ENCODE measurements at regions of chr19 and their contacts with region 1.

Region 1: DNA sequence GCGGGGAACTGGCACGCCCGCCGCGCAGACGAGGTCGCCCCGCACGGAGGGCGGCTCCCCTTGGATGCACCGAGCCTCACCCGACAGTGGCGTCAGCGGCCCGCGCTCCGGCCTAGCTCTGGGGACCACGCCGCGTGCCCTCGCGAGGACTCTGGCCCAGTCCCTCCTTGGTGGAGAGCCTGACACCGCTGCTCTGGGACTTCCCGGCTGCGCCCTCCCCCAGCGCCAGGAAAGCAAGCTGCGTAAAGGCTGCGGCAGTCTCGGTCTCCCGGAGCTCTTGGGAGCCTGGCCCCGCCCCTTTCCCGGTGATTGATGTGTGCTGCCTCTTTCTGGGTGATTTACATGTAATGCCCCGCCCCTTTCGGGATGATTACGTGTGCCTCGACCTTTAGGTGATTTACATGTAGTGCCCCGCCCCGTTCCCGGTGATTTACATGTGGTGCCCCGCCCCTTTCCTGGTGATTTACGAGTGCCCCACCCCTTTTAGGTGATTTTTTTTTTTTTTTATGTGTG is at the start of gene LENG9:
- DNase-seq: peak; percentile 97 to 100
- H3K4me3 ChIP-seq: peak within 1 kb of the TSS; percentile 71 to 79
- H3K27ac ChIP-seq: peak within 1 kb of the TSS; percentile 97
- H3K4me1 ChIP-seq: peaks cover 14 to 20% of the 10 kb centered on the region in 2 donors
- H3K27me3 ChIP-seq: no peaks in the 10 kb centered on the region
- CTCF ChIP-seq: no peak
- total RNA-seq, gene LENG9: 10.1 TPM

Region 2: DNA sequence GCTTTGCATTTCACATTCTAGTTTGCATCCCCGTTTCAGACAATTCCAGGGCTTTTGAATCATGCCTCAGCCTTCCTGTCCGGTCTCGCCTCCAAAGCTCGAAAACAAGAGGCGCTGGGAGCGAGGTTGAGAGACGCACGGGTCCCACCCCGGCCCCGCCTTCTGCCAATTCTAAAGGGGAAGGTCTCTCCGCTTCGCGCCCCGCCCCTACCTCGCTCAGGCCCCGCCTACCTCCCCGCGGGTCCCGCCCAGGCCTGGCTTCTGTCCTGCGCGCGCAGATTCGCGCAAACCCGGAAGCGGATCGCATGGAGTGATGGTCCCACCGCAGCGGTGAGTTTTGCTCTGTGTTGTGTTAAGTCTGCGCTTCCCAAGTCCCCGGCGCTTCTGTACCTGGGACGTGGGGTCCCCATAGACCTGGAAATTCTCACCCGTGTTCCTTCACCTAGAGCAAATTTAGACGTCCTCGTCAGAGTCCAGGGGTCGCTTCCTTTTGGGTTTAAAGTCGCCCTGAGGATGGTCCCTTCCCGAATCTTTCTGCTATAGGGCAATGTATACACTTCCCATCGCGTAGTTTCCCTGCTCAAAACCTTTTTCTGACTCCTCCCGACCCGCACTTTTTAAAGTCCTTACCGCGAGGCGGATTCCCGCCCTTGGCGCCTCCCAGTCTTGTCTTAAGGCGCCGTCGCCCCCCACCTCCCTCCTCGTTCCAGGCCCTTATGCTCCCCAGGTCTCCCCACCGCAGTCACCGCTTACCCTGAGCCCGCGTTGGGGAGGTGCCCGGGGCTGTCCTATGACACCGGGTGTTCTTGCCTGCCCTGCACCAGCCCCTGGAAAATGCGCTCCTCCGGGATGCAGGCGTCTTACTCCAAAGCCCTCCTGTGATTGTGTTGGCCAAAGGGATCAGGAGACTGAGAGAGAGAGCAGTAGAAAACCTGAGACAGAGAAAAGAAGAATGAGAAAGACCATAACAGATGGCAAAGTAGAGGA is 1129.8 kb before region 1 on chr19 and contains the start of gene ZNF845:
- intact Hi-C with region 1: loop called (anchors 5 kb)
- DNase-seq: peak; percentile 75 to 98
- H3K4me3 ChIP-seq: peak within 1 kb of the TSS; percentile 66 to 73
- H3K27ac ChIP-seq: peak within 1 kb of the TSS; percentile 77 to 82
- H3K4me1 ChIP-seq: peaks cover 0 to 4% of the 10 kb centered on the region in 2 donors
- H3K27me3 ChIP-seq: no peaks in the 10 kb centered on the region
- CTCF ChIP-seq: no peak
- total RNA-seq, gene ZNF845: 3.1 TPM

Region 3: DNA sequence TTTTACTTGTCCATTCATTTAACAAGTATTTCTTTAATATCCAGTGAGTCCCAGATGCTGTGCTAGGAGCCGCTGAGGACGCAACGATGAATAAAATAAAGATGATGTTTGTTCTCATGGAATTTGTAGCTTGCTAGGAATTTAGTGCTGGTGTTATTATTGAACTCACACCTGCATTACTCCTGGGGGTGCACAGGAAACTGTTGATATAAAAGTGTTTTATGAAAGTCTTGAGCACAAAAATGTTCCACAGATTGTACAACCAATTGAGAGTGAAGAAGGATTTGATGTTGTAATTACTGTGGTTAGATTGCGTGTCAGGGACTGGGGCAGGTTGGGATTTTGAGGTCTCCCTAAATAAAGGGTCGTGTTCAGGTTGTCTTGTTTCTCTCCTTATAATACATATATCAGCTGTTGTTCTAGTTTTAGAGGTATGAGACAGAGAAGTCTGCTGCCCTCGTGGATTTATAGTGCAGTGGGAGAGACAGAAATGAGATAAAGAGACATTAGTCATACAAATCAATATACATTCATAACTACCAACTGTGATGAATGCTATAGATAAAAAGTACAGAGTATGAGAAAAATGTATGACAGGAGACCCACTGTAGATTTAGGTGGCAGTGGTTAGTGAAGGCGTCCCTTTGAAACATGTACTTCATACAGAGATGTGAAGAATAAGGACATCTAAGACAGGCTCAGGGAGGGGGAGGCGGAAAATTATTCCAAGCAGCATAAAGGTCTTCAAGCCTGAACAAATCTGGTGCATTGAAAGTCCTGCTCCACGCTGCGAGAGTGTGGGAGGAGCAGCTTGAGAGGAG is 460.9 kb before region 1 on chr19:
- intact Hi-C with region 1: no loop called
- DNase-seq: no peak
- H3K4me3 ChIP-seq: no peak overlapping the region
- H3K27ac ChIP-seq: no peak overlapping the region
- H3K4me1 ChIP-seq: no peaks in the 10 kb centered on the region
- H3K27me3 ChIP-seq: no peaks in the 10 kb centered on the region
- CTCF ChIP-seq: no peak

Region 4: GRCh38 chr19:54137086-54137921 is 326.3 kb before region 1 on chr19 and contains the start of gene CNOT3:
- intact Hi-C with region 1: loop called (anchors 1 kb)
- DNase-seq: peak; percentile 100
- H3K4me3 ChIP-seq: peak within 1 kb of the TSS; percentile 95 to 98
- H3K27ac ChIP-seq: peak within 1 kb of the TSS; percentile 96 to 98
- H3K4me1 ChIP-seq: peaks cover 0 to 15% of the 10 kb centered on the region in 2 donors
- H3K27me3 ChIP-seq: no peaks in the 10 kb centered on the region
- CTCF ChIP-seq: no peak
- total RNA-seq, gene CNOT3: 69.1 TPM

Region 5: GRCh38 chr19:54448774-54449700 is 14.6 kb before region 1 on chr19 and contains the start of gene LENG8:
- intact Hi-C with region 1: loop called (anchors 1 kb)
- DNase-seq: peak; percentile 92 to 99
- H3K4me3 ChIP-seq: peak within 1 kb of the TSS; percentile 83 to 97
- H3K27ac ChIP-seq: peak within 1 kb of the TSS; percentile 86 to 97
- H3K4me1 ChIP-seq: peaks cover 11 to 39% of the 10 kb centered on the region in 2 donors
- H3K27me3 ChIP-seq: no peaks in the 10 kb centered on the region
- CTCF ChIP-seq: no peak
- total RNA-seq, gene LENG8: 402 TPM

Region 6: DNA sequence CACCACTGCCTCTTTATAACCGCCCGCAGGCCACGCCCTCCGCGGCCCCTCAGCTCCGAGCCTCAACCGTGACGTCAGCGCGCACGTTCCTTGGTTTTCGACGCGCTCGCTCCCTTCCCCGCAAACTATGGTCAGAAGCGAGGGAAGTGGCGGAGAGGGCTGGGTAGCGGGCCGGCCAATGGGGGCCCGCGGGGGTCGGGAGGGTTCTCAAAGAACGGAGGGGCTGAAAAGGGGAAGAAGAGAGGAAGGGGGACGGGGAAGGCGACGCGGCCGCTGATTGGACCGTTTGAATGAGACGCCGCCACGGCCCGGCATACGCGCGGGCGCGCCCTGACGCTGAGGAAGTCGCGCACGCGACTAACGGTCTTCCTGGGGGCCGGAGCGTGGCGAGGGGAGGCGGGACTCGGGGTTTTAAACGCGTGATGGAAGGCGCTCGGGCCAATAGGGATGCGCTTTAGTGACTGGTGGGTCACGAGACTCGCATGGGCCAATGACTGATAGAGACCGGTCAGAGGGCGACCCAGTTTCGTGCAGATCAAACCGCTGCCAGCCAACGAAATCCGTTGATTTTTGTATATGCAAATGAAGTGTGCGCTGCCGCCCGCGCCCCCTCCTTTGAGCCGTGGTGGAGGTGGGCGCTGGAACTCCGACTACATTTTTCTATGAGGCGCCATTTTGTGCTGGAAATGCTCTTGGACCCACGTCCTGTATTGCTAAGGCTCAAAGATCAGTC is 944.4 kb after region 1 on chr19:
- intact Hi-C with region 1: loop called (anchors 5 kb)
- DNase-seq: peak; percentile 95 to 99
- H3K4me3 ChIP-seq: peak overlapping the region; percentile 86 to 92
- H3K27ac ChIP-seq: peak overlapping the region; percentile 96 to 99
- H3K4me1 ChIP-seq: peaks cover 11 to 13% of the 10 kb centered on the region in 2 donors
- H3K27me3 ChIP-seq: no peaks in the 10 kb centered on the region
- CTCF ChIP-seq: no peak

Measured in ascending aorta (tissue), 2 donors.